Naive thymus-derived CD4-positive, alpha-beta T cell (primary cell): ENCODE measurements at regions of chr19 and their contacts with region 1.

Region 1: DNA sequence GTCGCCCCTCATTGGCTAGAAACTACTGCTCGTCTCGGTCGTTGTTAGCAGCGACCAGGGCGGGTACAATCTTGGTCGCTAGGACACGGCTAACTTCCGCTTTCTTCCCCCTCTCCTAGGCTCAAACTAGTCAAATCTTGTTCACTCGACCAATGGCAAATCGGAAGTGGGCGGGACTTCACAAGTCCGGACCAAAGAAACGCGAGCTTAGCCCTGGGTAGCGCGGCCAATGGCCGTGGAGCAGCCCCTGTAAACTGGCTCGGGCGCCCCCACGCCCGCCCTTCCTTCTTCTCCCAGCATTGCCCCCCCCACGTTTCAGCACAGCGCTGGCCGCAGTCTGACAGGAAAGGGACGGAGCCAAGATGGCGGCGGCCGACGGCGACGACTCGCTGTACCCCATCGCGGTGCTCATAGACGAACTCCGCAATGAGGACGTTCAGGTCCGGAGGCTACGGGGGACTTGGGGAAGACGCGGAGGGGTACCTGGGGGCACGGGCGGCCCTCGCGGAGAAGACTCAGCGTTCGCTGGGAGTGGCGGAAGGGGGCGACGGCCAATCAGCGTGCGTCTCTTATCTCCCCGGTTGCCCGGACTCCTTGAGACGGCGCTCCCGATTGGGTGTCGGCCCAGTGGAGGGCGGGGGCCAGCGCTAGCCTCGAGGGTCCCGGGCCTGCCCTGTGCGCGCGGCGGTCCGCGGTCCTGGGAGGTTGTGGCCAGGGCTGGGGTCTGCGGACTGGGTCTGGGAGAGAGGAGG is at the start of gene PPP2R1A:
- DNase-seq: peak; percentile 97 to 100 (median 99)
- ATAC-seq: peak; percentile 91
- H3K4me3 ChIP-seq: peak within 1 kb of the TSS; percentile 86
- H3K4me3 Mint-ChIP-seq: peak within 1 kb of the TSS; percentile 91 to 99 (median 96)
- H3K27ac ChIP-seq: peak within 1 kb of the TSS; percentile 97
- H3K27ac Mint-ChIP-seq: peak within 1 kb of the TSS; percentile 95 to 100 (median 99)
- H3K4me1 ChIP-seq: peaks cover 34 to 39% of the 10 kb centered on the region in 2 donors
- H3K4me1 Mint-ChIP-seq: peaks cover 29 to 59% (median 46%) of the 10 kb centered on the region in 7 donors
- H3K27me3 ChIP-seq: no peaks in the 10 kb centered on the region
- H3K27me3 Mint-ChIP-seq: no peaks in the 10 kb centered on the region
- total RNA-seq, gene PPP2R1A: 156 to 215 (median 168) TPM

Region 2: DNA sequence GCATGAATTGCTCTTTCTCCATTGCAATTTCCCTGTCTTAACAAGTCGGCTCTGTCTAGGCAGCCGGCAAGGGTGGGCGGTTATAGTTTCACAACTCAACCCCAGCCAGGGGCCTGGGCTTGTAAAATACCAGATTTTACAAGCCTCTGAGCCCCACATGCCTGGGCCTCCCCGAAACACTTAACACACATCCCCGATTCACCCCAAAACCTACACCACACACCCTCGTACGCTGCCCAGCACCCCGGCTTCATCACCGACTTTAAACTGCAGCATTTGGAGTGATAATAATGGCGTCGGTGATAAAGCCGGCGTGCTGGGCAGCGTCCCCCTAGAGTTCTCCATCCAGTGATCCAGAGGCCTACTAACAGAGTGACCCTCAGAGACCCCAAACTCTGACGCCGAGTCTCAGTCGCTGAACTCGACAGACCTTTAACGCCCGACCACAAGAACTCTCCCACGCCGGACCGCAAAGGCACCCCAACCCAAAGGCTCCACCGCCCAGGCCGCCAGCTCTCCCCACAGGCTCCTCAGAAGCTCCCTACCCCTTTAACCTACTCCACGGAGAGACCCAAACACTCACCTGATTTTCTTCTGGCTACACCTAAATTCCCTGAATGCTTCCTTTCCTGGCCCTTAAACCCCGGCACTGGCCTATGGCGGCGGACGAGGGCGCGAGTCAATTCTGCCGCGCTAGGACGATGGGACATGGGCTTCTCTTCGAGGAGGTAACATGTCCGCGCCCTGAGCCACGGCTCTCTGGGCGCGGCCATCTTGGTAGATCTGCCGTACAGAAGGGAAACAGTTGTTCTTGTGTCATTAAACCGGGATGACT is 285.4 kb before region 1 on chr19 and contains the start of gene ZNF649:
- CTCF ChIA-PET with region 1: no interaction called
- POLR2A ChIA-PET with region 1: no interaction called
- intact Hi-C with region 1: loop called in 1 of 2 experiments (anchors 5 kb)
- DNase-seq: peak; percentile 67 to 84 (median 74)
- ATAC-seq: peak; percentile 98
- H3K4me3 ChIP-seq: peak within 1 kb of the TSS; percentile 84
- H3K4me3 Mint-ChIP-seq: peak within 1 kb of the TSS; percentile 87 to 100 (median 99)
- H3K27ac ChIP-seq: peak within 1 kb of the TSS; percentile 84
- H3K27ac Mint-ChIP-seq: peak within 1 kb of the TSS; percentile 89 to 99 (median 97)
- H3K4me1 ChIP-seq: peaks cover 0 to 5% of the 10 kb centered on the region in 2 donors
- H3K4me1 Mint-ChIP-seq: peaks cover 8 to 33% (median 28%) of the 10 kb centered on the region in 7 donors
- H3K27me3 ChIP-seq: no peaks in the 10 kb centered on the region
- H3K27me3 Mint-ChIP-seq: peaks cover 0 to 31% (median 19%) of the 10 kb centered on the region in 5 donors
- total RNA-seq, gene ZNF649: 11.1 to 33.4 (median 14.5) TPM

Region 3: DNA sequence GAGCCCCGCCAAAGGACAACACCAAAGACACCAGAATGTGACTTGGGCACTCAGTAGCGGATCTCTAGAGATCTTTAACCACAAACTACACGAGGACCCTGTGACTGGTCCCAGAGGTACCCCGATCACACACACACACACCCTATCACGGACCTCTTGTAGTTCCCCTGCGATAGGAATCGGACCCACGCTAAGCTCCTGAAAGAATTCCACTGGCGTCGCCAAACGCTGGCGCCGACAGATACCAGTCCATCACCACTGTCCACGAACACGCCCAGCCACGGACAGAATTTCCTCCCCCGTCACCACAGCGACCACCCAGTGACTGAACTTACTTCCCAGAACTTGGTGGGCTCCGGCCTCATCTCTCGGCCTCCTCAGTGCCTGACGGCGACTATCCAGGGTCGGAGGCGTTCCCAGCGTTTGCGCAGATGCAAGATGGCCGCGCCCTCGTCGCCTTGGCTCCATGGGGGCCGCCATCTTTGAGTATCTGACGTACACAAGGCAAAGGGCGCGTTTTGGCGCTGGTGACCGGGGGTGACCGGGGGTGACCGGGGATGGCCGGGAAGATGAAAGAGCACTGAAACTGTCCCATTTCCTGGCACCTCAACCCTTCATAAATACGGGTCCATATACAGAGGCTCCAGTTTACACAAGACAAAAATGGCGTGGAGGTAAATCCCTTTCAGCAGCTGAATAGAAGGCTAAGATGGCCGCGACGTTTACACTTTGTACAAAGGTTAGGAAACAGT is 181.9 kb before region 1 on chr19 and contains the start of gene ZNF615:
- CTCF ChIA-PET with region 1: no interaction called
- POLR2A ChIA-PET with region 1: no interaction called
- intact Hi-C with region 1: loop called in 1 of 2 experiments (anchors 1 kb)
- DNase-seq: peak; percentile 80 to 96 (median 85)
- ATAC-seq: peak; percentile 97
- H3K4me3 ChIP-seq: peak within 1 kb of the TSS; percentile 89
- H3K4me3 Mint-ChIP-seq: peak within 1 kb of the TSS; percentile 92 to 98 (median 98)
- H3K27ac ChIP-seq: peak within 1 kb of the TSS; percentile 83
- H3K27ac Mint-ChIP-seq: peak within 1 kb of the TSS; percentile 91 to 99 (median 95)
- H3K4me1 ChIP-seq: peaks cover 7% of the 10 kb centered on the region in 2 donors
- H3K4me1 Mint-ChIP-seq: peaks cover 15 to 33% (median 21%) of the 10 kb centered on the region in 7 donors
- H3K27me3 ChIP-seq: no peaks in the 10 kb centered on the region
- H3K27me3 Mint-ChIP-seq: no peaks in the 10 kb centered on the region
- total RNA-seq, gene ZNF615: 8.7 to 20.9 (median 11.0) TPM

Region 4: GRCh38 chr19:52139252-52140031 is 50.5 kb before region 1 on chr19 and contains the start of gene ZNF616:
- CTCF ChIA-PET with region 1: interaction called, 7 read pairs
- POLR2A ChIA-PET with region 1: interaction called, 22 read pairs
- intact Hi-C with region 1: loop called (anchors 1 kb)
- DNase-seq: peak; percentile 58 to 97 (median 95)
- ATAC-seq: peak; percentile 74
- H3K4me3 ChIP-seq: peak within 1 kb of the TSS; percentile 99
- H3K4me3 Mint-ChIP-seq: peak within 1 kb of the TSS; percentile 92 to 99 (median 96)
- H3K27ac ChIP-seq: peak within 1 kb of the TSS; percentile 89
- H3K27ac Mint-ChIP-seq: peak within 1 kb of the TSS; percentile 88 to 98 (median 96)
- H3K4me1 ChIP-seq: peaks cover 15 to 18% of the 10 kb centered on the region in 2 donors
- H3K4me1 Mint-ChIP-seq: peaks cover 20 to 44% (median 33%) of the 10 kb centered on the region in 7 donors
- H3K27me3 ChIP-seq: no peaks in the 10 kb centered on the region
- H3K27me3 Mint-ChIP-seq: no peaks in the 10 kb centered on the region
- total RNA-seq, gene ZNF616: 2.8 to 18.5 (median 6.1) TPM

Region 5: DNA sequence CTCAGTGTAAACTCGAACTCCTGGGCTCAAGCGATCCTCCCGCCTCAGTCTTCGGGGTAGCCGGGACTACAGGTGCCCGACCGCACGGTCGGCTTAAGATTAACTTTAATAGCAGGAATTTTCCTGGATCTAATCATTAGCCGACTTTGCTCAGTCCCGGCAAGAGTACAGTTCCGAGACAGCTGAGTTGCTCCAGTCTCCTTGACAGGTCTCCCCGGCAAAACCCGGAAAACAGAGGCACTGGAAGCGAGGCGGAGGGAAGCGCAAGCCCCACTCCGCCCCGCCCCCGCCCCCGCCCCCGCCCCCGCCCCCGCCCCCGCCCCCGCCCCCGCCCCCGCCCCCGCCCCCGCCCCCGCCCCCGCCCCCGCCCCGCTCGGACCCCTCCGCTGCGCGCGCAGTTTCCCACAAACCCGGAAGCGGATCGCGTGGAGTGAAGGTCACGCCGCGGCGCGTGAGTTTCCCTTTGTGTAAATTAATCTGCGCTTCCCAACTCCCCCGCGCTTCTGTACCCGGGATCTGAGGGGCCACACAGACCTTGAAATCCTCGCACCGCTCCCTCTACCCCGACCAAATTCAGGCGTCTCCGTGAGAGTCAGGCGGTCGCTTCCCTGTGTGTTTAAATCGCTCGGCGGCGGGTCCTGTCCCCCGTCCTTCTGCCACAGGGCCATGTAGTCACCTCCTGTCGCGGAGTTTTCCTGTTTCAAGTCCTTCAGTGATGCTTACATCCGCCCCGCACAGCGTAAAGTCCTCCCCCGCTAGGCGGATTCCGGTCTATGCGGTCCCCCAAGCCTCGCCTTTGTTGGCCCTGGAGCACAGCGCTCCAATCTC is 107.1 kb after region 1 on chr19 and contains the start of gene ZNF480:
- CTCF ChIA-PET with region 1: no interaction called
- POLR2A ChIA-PET with region 1: interaction called, 3 read pairs
- intact Hi-C with region 1: loop called in 1 of 2 experiments (anchors 1 kb)
- DNase-seq: peak; percentile 67 to 91 (median 87)
- ATAC-seq: peak; percentile 89
- H3K4me3 ChIP-seq: peak within 1 kb of the TSS; percentile 85
- H3K4me3 Mint-ChIP-seq: peak within 1 kb of the TSS; percentile 89 to 99 (median 98)
- H3K27ac ChIP-seq: peak within 1 kb of the TSS; percentile 97
- H3K27ac Mint-ChIP-seq: peak within 1 kb of the TSS; percentile 95 to 99 (median 98)
- H3K4me1 ChIP-seq: peaks cover 4 to 5% of the 10 kb centered on the region in 2 donors
- H3K4me1 Mint-ChIP-seq: peaks cover 15 to 32% (median 19%) of the 10 kb centered on the region in 7 donors
- H3K27me3 ChIP-seq: no peaks in the 10 kb centered on the region
- H3K27me3 Mint-ChIP-seq: peaks cover 0 to 3% (median 0%) of the 10 kb centered on the region in 5 donors
- total RNA-seq, gene ZNF480: 8.5 to 28.9 (median 13.3) TPM

Region 6: GRCh38 chr19:52570000-52570861 is 380.3 kb after region 1 on chr19 and contains the start of gene ZNF701:
- CTCF ChIA-PET with region 1: no interaction called
- POLR2A ChIA-PET with region 1: no interaction called
- intact Hi-C with region 1: loop called in 1 of 2 experiments (anchors 1 kb)
- DNase-seq: peak; percentile 92 to 99 (median 96)
- ATAC-seq: peak; percentile 100
- H3K4me3 ChIP-seq: peak within 1 kb of the TSS; percentile 78
- H3K4me3 Mint-ChIP-seq: peak within 1 kb of the TSS; percentile 88 to 99 (median 94)
- H3K27ac ChIP-seq: peak within 1 kb of the TSS; percentile 78
- H3K27ac Mint-ChIP-seq: peak within 1 kb of the TSS; percentile 92 to 98 (median 95)
- H3K4me1 ChIP-seq: peaks cover 10 to 13% of the 10 kb centered on the region in 2 donors
- H3K4me1 Mint-ChIP-seq: peaks cover 9 to 42% (median 37%) of the 10 kb centered on the region in 7 donors
- H3K27me3 ChIP-seq: no peaks in the 10 kb centered on the region
- H3K27me3 Mint-ChIP-seq: no peaks in the 10 kb centered on the region
- total RNA-seq, gene ZNF701: 11.7 to 43.3 (median 28.3) TPM

Region 7: DNA sequence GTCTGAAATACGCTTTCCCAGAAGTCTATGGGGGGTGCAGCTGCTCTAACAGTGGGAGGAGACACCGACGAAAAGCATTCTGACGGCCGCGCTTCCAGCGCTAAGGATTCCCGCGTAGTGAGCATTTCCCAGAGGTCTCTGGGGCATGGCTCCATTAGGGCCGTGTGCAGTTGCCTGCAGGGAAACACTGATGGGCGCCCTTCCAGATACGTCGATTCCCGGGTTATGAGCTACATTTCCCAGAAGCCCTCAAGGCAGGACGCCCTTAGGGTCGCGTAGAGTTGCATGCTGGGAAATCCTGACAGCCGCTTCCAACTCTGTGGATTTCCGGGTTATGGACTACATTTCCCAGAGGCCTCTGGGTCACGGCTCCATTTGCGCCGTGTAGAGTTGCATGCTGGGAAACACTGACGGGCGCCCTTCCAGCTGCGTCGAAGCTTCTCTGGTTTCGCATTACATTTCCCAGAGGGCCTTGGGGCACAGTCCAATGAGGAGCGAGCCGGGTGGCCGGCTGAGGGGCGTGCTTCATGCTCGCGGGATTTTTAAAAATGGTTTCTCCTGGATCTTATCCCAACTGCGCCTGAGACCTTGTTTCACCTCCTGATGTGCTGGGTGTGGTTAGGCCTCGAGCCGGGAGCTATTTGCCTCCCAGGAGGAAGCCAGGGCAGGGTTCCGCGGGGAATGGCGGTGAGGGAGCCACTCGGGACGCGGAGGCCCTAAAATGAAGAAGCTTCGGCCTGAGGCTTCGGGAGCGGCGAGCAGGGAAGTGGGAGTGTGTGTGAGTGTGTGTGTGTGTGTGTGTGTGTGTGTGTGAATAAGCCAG is 1330.8 kb after region 1 on chr19:
- CTCF ChIA-PET with region 1: no interaction called
- POLR2A ChIA-PET with region 1: no interaction called
- intact Hi-C with region 1: loop called (anchors 1 to 2 kb)
- DNase-seq: peak; percentile 65 to 93 (median 89)
- ATAC-seq: peak; percentile 100
- H3K4me3 ChIP-seq: peak overlapping the region; percentile 99
- H3K4me3 Mint-ChIP-seq: peak overlapping the region; percentile 94 to 99 (median 98)
- H3K27ac ChIP-seq: peak overlapping the region; percentile 69
- H3K27ac Mint-ChIP-seq: peak overlapping the region; percentile 84 to 96 (median 94)
- H3K4me1 ChIP-seq: peaks cover 9 to 10% of the 10 kb centered on the region in 2 donors
- H3K4me1 Mint-ChIP-seq: peaks cover 10 to 27% (median 18%) of the 10 kb centered on the region in 7 donors
- H3K27me3 ChIP-seq: no peaks in the 10 kb centered on the region
- H3K27me3 Mint-ChIP-seq: no peaks in the 10 kb centered on the region